Panc1 (cell line): ENCODE measurements at regions of chr10 and their contacts with region 1.

Region 1: DNA sequence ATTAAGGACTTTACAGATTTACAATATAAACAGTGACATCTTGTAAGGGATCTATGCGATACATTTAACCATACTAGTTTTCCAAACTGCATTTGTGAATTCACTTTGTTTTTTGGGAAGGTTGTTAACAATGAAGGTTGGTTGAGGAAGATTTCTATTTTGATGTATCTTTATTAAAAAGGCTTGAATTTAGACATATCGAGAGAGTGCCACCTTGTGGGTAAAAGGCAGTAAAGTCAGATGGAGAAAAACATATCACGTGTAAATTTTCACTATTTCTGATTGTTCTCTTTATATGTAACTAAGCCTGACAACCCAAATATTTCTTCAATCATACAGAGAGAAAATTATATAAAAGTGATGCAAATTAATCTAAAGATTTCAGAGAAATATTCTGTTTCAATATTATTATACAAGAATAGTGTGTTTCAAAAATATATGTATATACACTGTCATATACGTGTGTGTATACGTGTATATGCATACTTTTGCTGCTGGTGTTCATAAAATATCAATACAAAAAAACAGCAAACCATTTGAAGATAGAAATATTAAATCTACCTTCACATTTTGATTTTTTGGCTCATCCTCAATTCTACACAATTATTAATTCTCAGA is 988.6 kb downstream of the SORCS1 start:
- DNase-seq: peak; percentile 7
- ATAC-seq: no peak
- H3K4me3 ChIP-seq: no peak overlapping the region
- H3K27ac ChIP-seq: no peak overlapping the region
- H3K4me1 ChIP-seq: no peaks in the 10 kb centered on the region
- H3K27me3 ChIP-seq: no peaks in the 10 kb centered on the region; the same call in 1 of the 2 replicates
- CTCF ChIP-seq: peak; percentile 64; the same call in 1 of the 2 replicates

Region 2: DNA sequence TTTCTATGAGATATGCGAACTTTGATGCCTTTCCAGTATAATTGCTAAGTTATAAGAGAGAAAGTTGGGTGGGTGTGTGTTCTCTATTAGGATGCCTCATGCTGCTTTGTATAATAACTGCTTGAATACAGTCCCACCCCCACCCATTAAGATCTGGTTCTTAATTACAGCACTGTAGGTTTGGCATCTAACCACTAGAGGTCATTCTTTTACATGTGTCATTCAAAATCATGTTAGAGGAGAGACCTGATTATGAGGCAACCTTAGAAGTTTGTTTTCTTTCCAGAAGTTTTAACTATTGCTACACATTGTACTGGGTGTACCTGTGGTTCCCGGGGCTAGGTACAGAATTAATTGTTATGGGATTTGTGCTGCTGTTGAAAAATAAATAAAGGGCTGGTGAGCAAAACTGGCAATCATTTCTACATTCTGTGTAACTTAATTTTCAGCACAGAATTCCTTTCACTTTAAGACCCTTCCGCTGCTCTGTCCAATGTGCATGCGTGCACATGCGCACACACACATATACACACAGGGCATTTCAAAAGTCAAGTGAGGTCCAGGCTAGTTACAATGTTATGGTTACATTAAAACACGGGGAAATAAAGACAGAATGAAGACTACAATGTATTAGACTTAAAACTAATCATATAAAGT is 378.5 kb before region 1 on chr10:
- CTCF ChIA-PET with region 1: no interaction called
- POLR2A ChIA-PET with region 1: no interaction called
- in situ Hi-C with region 1: no loop called
- intact Hi-C with region 1: loop called (anchors 10 kb)
- DNase-seq: peak; percentile 15
- ATAC-seq: no peak
- H3K4me3 ChIP-seq: no peak overlapping the region
- H3K27ac ChIP-seq: no peak overlapping the region
- H3K4me1 ChIP-seq: no peaks in the 10 kb centered on the region
- H3K27me3 ChIP-seq: no peaks in the 10 kb centered on the region
- CTCF ChIP-seq: peak; percentile 75

Region 3: GRCh38 chr10:105950410-105950809 is 225.5 kb before region 1 on chr10:
- CTCF ChIA-PET with region 1: no interaction called
- POLR2A ChIA-PET with region 1: interaction called, 5 read pairs
- in situ Hi-C with region 1: no loop called
- intact Hi-C with region 1: loop called (anchors 1 kb)
- DNase-seq: no peak
- ATAC-seq: peak; percentile 73; the same call in 1 of the 2 replicates
- H3K4me3 ChIP-seq: no peak overlapping the region
- H3K27ac ChIP-seq: no peak overlapping the region
- H3K4me1 ChIP-seq: no peaks in the 10 kb centered on the region
- H3K27me3 ChIP-seq: no peaks in the 10 kb centered on the region; the same call in 1 of the 2 replicates
- CTCF ChIP-seq: peak; percentile 82